ENCODE measurements at regions of chr2 and their contacts with region 1.

Region 1: GRCh38 chr2:195656859-195657633 is at the start of gene SLC39A10:
- DNase-seq: peak; percentile 98
- H3K4me3 Mint-ChIP-seq: peak within 1 kb of the TSS; percentile 81
- H3K27ac Mint-ChIP-seq: peak within 1 kb of the TSS; percentile 93
- H3K4me1 Mint-ChIP-seq: peaks cover 7% of the 10 kb centered on the region
- H3K27me3 Mint-ChIP-seq: no peaks in the 10 kb centered on the region
- CTCF ChIP-seq: no peak
- total RNA-seq, gene SLC39A10: 47.8 and 59.8 TPM in 2 replicates

Region 2: GRCh38 chr2:195318440-195319111 is 338.5 kb before region 1 on chr2:
- CTCF ChIA-PET with region 1: interaction called, 23 read pairs
- POLR2A ChIA-PET with region 1: interaction called, 107 read pairs
- intact Hi-C with region 1: loop called (anchors 1 kb)
- DNase-seq: peak; percentile 70
- H3K4me3 Mint-ChIP-seq: peak overlapping the region; percentile 28
- H3K27ac Mint-ChIP-seq: peak overlapping the region; percentile 82
- H3K4me1 Mint-ChIP-seq: peaks cover 31% of the 10 kb centered on the region
- H3K27me3 Mint-ChIP-seq: no peaks in the 10 kb centered on the region
- CTCF ChIP-seq: peak; percentile 67

Region 3: DNA sequence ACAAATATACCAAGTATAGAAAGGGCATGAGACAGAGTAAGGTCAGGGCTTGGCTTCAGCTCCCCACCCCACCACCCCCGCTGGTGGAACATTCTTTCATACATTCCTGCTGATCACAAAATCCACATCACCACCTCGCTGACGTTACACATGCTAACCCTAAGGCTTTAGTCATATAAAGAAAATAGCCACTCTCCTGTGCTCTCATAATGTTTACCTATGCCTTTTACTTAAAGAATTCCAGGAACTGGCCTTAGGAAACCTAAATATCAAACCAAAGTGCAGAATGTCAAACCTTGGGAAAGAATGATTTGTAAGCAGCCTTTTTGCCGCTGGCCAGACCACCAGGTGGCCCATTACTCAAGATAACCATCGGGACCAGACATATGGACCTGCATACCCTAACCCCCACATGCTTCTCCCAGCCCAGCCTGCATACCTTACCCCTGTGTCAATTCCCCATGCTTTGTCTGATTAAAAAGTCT is 136.3 kb before region 1 on chr2:
- CTCF ChIA-PET with region 1: interaction called, 6 read pairs
- POLR2A ChIA-PET with region 1: interaction called, 3 read pairs
- intact Hi-C with region 1: loop called (anchors 2 kb)
- DNase-seq: peak; percentile 64
- H3K4me3 Mint-ChIP-seq: no peak overlapping the region
- H3K27ac Mint-ChIP-seq: peak overlapping the region; percentile 28
- H3K4me1 Mint-ChIP-seq: peaks cover 10% of the 10 kb centered on the region
- H3K27me3 Mint-ChIP-seq: no peaks in the 10 kb centered on the region
- CTCF ChIP-seq: no peak

Region 4: GRCh38 chr2:195575879-195576401 is 81.1 kb before region 1 on chr2:
- CTCF ChIA-PET with region 1: interaction called, 46 read pairs
- POLR2A ChIA-PET with region 1: interaction called, 34 read pairs
- intact Hi-C with region 1: loop called (anchors 1 kb)
- DNase-seq: peak; percentile 85
- H3K4me3 Mint-ChIP-seq: peak overlapping the region; percentile 36
- H3K27ac Mint-ChIP-seq: peak overlapping the region; percentile 79
- H3K4me1 Mint-ChIP-seq: peaks cover 22% of the 10 kb centered on the region
- H3K27me3 Mint-ChIP-seq: no peaks in the 10 kb centered on the region
- CTCF ChIP-seq: no peak

Region 5: DNA sequence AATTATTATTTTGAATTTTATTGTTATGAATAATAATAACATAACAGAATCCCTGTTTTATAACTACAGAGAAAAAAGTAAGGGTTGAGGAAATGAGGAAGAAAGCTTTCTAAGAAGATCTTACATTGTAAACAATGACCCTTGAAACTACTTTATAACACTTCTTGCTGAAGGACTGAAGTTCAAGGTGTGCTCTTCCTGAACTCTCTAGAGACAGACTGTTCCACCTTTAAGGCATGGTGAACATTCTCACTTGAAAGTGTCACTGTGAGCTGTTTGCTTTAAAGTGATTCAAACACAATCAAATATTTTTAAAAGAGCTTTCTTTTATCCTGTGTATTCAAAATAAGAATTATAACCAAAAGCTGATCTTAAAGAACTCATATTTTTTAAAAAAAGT is 280.1 kb after region 1 on chr2:
- CTCF ChIA-PET with region 1: interaction called, 19 read pairs
- POLR2A ChIA-PET with region 1: interaction called, 7 read pairs
- intact Hi-C with region 1: no loop called
- DNase-seq: no peak
- H3K4me3 Mint-ChIP-seq: no peak overlapping the region
- H3K27ac Mint-ChIP-seq: no peak overlapping the region
- H3K4me1 Mint-ChIP-seq: no peaks in the 10 kb centered on the region
- H3K27me3 Mint-ChIP-seq: no peaks in the 10 kb centered on the region
- CTCF ChIP-seq: no peak

Measured in MCF 10A (cell line).